Activated T-helper 1 cell treated with anti-CD3 and anti-CD28 coated beads, Interleukin-12 subunit alpha, Interleukin-12 subunit beta, Interleukin-2, Interleukin-4 antibody, amounts not matched to agents 30 ng/mL and 10 ng/mL and 1 ng/mL, durations not matched to agents 14 hours and 24 hours and 36 hours (primary cell): ENCODE measurements at regions of chr10 and their contacts with region 1.

Region 1: GRCh38 chr10:59906417-59907202 is at the start of gene CCDC6:
- DNase-seq: peak; percentile 86
- H3K4me3 Mint-ChIP-seq: peak within 1 kb of the TSS; percentile 98
- H3K27ac Mint-ChIP-seq: peak within 1 kb of the TSS; percentile 99
- H3K4me1 Mint-ChIP-seq: peaks cover 55% of the 10 kb centered on the region
- H3K27me3 Mint-ChIP-seq: peaks cover 2% of the 10 kb centered on the region
- total RNA-seq, gene CCDC6: 97.6 and 103 TPM in 2 replicates

Region 2: GRCh38 chr10:59611043-59611442 is 295.6 kb before region 1 on chr10:
- intact Hi-C with region 1: no loop called
- DNase-seq: no peak
- H3K4me3 Mint-ChIP-seq: no peak overlapping the region
- H3K27ac Mint-ChIP-seq: no peak overlapping the region
- H3K4me1 Mint-ChIP-seq: no peaks in the 10 kb centered on the region
- H3K27me3 Mint-ChIP-seq: no peaks in the 10 kb centered on the region

Region 3: DNA sequence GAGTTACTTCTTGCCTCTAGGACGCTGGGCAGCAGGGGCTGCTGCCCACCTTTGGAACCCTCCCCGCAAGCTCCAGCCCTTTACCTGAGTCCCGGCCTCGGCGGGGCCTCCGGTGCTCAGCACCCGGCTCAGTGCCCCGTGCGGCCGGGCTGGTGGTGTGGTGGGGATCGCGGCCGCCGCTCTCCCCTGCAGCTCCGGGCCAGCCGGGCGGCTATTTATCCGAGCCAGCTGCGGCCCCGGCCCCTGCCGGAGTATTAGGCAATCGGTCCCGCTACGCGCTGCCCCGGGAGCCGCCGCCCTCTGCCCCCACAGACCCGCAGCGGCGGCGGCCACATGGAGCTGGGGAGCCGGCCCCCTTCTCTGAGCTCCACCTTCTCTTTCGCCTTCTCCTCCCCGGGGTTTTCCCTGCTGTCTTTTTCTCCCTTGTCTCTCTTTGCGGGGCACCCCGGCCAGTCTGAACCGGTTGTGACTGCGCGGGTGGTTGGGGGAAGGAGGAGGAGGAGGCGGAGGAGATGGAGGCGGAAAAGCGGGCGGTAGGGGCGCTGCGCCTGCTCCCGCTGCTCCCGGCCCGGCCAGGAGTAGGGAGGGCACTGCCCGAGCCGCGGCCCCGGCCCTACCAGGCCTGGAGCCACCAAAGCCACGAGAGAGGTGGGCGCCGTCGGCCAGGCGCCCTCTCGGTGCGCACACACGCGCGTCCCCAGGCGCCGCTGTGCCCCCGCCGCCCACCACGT is 197.1 kb before region 1 on chr10 and contains the start of gene SLC16A9:
- intact Hi-C with region 1: loop called (anchors 1 kb)
- DNase-seq: peak; percentile 67
- H3K4me3 Mint-ChIP-seq: peak within 1 kb of the TSS; percentile 77
- H3K27ac Mint-ChIP-seq: peak within 1 kb of the TSS; percentile 75
- H3K4me1 Mint-ChIP-seq: peaks cover 10% of the 10 kb centered on the region
- H3K27me3 Mint-ChIP-seq: peaks cover 46% of the 10 kb centered on the region
- total RNA-seq, gene SLC16A9: 4.2 and 5.4 TPM in 2 replicates

Region 4: DNA sequence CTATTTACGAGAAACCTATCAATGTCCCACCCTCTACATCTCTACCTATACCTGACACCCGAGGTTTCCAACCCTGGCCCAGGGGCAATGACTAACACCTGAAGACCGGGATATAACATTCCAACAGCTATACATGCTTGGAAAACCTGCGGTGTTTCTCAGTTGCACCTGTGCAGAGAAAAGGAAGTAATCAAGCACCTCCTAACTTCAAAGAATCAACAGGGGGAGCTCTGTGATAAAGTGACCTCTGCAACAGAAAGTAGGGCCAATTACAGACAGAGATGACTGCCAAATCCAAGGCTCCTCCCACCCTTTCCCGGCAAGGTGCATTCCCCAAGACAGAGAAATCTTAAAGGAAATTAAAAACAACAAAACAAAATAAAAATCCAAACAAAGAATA is 41.5 kb before region 1 on chr10:
- intact Hi-C with region 1: loop called (anchors 1 kb)
- DNase-seq: no peak
- H3K4me3 Mint-ChIP-seq: peak overlapping the region; percentile 20
- H3K27ac Mint-ChIP-seq: peak overlapping the region; percentile 56
- H3K4me1 Mint-ChIP-seq: peaks cover 61% of the 10 kb centered on the region
- H3K27me3 Mint-ChIP-seq: no peaks in the 10 kb centered on the region

Region 5: GRCh38 chr10:60032723-60033122 is 126.1 kb after region 1 on chr10:
- intact Hi-C with region 1: loop called (anchors 1 kb)
- DNase-seq: no peak
- H3K4me3 Mint-ChIP-seq: no peak overlapping the region
- H3K27ac Mint-ChIP-seq: no peak overlapping the region
- H3K4me1 Mint-ChIP-seq: peaks cover 5% of the 10 kb centered on the region
- H3K27me3 Mint-ChIP-seq: no peaks in the 10 kb centered on the region

Region 6: DNA sequence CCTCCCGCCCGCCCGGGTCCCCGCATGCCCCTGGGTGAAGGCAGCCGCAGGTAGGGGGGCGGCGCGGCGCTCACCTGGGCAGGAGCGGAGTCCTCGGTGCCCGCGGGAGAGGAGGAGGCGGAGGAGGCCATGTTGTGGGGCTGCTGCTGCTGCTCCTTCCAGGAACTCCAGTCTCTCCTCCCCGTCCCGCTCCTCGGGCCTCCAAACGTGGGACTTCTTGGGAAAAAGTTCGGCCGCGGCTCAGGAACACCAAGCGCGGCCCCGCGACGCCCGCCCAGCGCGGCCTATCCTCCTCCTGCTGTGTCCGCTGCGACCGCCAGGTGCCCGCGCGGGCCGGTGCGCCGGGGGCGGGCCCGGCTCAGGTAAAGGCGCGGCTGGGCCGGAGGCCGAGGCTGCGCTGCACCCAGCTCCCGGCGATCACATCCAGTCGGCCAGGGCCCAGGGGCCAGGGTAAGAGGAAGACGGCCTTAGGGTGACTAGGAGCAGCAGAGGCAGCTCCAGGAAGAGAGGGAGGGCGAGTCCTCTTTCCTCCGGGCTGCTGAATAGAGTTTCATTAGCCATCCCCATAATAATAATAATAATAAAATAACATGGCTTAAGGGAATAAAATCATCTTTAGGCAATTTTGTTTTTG is 826.7 kb after region 1 on chr10:
- intact Hi-C with region 1: loop called (anchors 5 kb)
- DNase-seq: peak; percentile 36
- H3K4me3 Mint-ChIP-seq: no peak overlapping the region
- H3K27ac Mint-ChIP-seq: no peak overlapping the region
- H3K4me1 Mint-ChIP-seq: peaks cover 48% of the 10 kb centered on the region
- H3K27me3 Mint-ChIP-seq: peaks cover 4% of the 10 kb centered on the region